Heart left ventricle (tissue), 16 donors: ENCODE measurements at regions of chr9 and their contacts with region 1.

Region 1: GRCh38 chr9:21326526-21327139 is 8.6 kb downstream of the KLHL9 start:
- DNase-seq: no peak
- ATAC-seq: peak in 3 of 4 donors; percentile 59 to 77 (median 65)
- H3K4me3 ChIP-seq: no peak overlapping the region
- H3K27ac ChIP-seq: no peak overlapping the region
- H3K4me1 ChIP-seq: peaks cover 2 to 51% (median 28%) of the 10 kb centered on the region in 12 donors
- H3K27me3 ChIP-seq: no peaks in the 10 kb centered on the region
- CTCF ChIP-seq: peak; percentile 58 to 79 (median 72)
- POLR2A ChIP-seq: no peak

Region 2: DNA sequence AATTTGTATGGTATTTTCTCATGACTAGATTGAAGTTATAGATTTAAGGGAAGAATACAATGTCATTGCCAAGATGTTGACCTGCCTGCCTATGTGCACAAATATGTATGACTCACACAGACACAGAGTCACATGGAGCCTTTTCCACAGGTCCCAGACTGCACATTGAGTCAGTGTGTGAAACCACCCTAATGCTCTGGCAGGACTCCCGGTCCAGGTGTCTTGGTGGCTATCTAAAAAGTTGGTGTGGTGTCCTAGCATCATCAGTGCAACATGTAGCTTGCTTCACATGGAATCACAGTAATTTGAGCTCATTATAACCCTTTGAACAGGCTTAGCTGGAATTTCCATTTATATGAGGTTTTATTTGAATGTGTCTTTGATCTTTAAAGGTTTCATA is 32.3 kb before region 1 on chr9:
- intact Hi-C with region 1: no loop called
- DNase-seq: no peak
- ATAC-seq: no peak
- H3K4me3 ChIP-seq: no peak overlapping the region
- H3K27ac ChIP-seq: no peak overlapping the region
- H3K4me1 ChIP-seq: peaks cover 0 to 8% (median 0%) of the 10 kb centered on the region in 12 donors
- H3K27me3 ChIP-seq: peaks cover 0 to 8% (median 0%) of the 10 kb centered on the region in 9 donors
- CTCF ChIP-seq: no peak
- POLR2A ChIP-seq: no peak

Region 3: DNA sequence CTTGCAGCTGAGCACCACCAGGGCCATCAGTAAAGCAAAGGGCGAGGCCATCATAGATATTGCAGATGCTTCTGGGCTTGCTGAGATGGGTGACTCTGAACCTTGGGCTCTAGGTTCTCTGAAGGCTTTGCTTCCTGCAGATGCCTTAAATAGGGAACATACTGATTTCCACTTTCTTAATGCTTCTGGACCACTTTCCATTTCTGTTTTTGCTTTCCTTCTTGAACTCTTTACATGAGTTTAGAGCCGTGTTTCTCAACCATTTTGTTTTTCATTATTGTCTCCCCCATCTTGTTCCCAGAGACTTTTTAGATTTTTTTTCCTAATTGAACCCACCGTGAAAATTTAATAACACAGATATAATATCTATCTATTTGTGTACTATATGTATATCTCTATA is 41.3 kb after region 1 on chr9 and contains the start of gene IFNA13:
- intact Hi-C with region 1: no loop called
- DNase-seq: no peak
- ATAC-seq: no peak
- H3K4me3 ChIP-seq: no peak within 1 kb of the TSS
- H3K27ac ChIP-seq: no peak within 1 kb of the TSS
- H3K4me1 ChIP-seq: no peaks in the 10 kb centered on the region
- H3K27me3 ChIP-seq: peaks cover 0 to 36% (median 8%) of the 10 kb centered on the region in 9 donors
- CTCF ChIP-seq: no peak
- POLR2A ChIP-seq: no peak
- total RNA-seq, gene IFNA13: not detected

Region 4: GRCh38 chr9:21381448-21382339 is 55.1 kb after region 1 on chr9:
- intact Hi-C with region 1: loop called in 1 of 10 experiments (anchors 10 kb)
- DNase-seq: no peak
- ATAC-seq: no peak
- H3K4me3 ChIP-seq: no peak overlapping the region
- H3K27ac ChIP-seq: no peak overlapping the region
- H3K4me1 ChIP-seq: peaks cover 0 to 30% (median 0%) of the 10 kb centered on the region in 12 donors
- H3K27me3 ChIP-seq: peaks cover 0 to 80% (median 16%) of the 10 kb centered on the region in 9 donors
- CTCF ChIP-seq: no peak
- POLR2A ChIP-seq: no peak

Region 5: GRCh38 chr9:21395778-21396717 is 69.4 kb after region 1 on chr9:
- intact Hi-C with region 1: loop called in 6 of 10 experiments (anchors 2 to 5 kb)
- DNase-seq: peak; percentile 30 to 76 (median 52)
- ATAC-seq: peak in 3 of 4 donors; percentile 65 to 78 (median 69)
- H3K4me3 ChIP-seq: peak overlapping the region in 11 of 12 donors; percentile 35 to 59 (median 51)
- H3K27ac ChIP-seq: no peak overlapping the region
- H3K4me1 ChIP-seq: peaks cover 0 to 12% (median 0%) of the 10 kb centered on the region in 12 donors
- H3K27me3 ChIP-seq: peaks cover 0 to 86% (median 37%) of the 10 kb centered on the region in 9 donors
- CTCF ChIP-seq: peak; percentile 66 to 87 (median 78)
- POLR2A ChIP-seq: no peak

Region 6: GRCh38 chr9:21413624-21414023 is 87.0 kb after region 1 on chr9:
- intact Hi-C with region 1: loop called in 1 of 10 experiments (anchors 10 kb)
- DNase-seq: no peak
- ATAC-seq: peak in 1 of 4 donors; percentile 54
- H3K4me3 ChIP-seq: no peak overlapping the region
- H3K27ac ChIP-seq: no peak overlapping the region
- H3K4me1 ChIP-seq: no peaks in the 10 kb centered on the region
- H3K27me3 ChIP-seq: peaks cover 0 to 16% (median 0%) of the 10 kb centered on the region in 9 donors
- CTCF ChIP-seq: peak in 4 of 12 donors; percentile 4 to 20 (median 15)
- POLR2A ChIP-seq: no peak